ENCODE measurements at regions of chr14 and their contacts with region 1.

Region 1: DNA sequence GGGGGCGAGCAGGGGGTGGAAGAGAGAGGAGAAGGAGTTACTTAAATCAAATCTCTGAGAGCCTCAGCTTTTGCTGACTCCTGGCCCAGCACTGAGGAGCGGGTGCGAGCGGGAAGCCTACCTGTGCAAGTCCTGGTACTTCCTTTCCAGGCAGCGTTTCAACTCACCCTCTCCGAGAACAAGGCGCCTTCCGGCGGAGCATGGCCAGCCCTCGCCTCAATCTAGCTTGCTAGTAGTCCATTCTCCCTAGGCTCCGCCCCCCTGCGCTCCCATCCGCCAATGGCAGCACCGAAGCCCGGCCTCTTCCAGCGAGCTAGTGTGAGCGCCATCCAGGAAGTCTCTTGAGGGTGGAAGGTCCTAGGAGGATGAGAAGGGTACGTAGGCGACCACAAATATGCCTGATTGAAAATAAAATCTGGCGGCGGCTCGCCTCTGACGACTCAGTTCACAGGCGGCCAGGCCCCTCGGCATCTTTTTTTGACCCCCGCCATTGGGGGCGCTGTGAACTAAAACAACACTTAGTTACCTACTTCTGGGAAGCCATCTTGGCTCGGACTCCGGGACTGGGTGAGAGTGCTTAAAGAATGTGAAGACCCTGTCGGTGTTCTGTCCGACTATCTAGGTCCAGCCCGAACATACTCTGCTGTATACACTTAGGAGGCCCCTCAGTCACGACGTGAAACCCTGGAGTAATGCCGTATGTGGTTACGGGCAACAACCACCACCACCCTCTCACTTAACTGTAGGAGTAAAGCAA is at the start of gene CHD8:
- DNase-seq: peak; percentile 99
- H3K4me3 Mint-ChIP-seq: peak within 1 kb of the TSS; percentile 98
- H3K27ac Mint-ChIP-seq: peak within 1 kb of the TSS; percentile 99
- H3K4me1 Mint-ChIP-seq: peaks cover 37% of the 10 kb centered on the region
- H3K27me3 Mint-ChIP-seq: no peaks in the 10 kb centered on the region
- total RNA-seq, gene CHD8: 108 to 112 TPM

Region 2: GRCh38 chr14:21185491-21185890 is 270.6 kb before region 1 on chr14:
- CTCF ChIA-PET with region 1: no interaction called
- POLR2A ChIA-PET with region 1: no interaction called
- DNase-seq: no peak
- H3K4me3 Mint-ChIP-seq: no peak overlapping the region
- H3K27ac Mint-ChIP-seq: no peak overlapping the region
- H3K4me1 Mint-ChIP-seq: no peaks in the 10 kb centered on the region
- H3K27me3 Mint-ChIP-seq: peaks cover 24% of the 10 kb centered on the region

Region 3: GRCh38 chr14:21428930-21429329 is 27.2 kb before region 1 on chr14:
- CTCF ChIA-PET with region 1: interaction called, 7 read pairs
- POLR2A ChIA-PET with region 1: interaction called, 13 read pairs
- DNase-seq: no peak
- H3K4me3 Mint-ChIP-seq: no peak overlapping the region
- H3K27ac Mint-ChIP-seq: no peak overlapping the region
- H3K4me1 Mint-ChIP-seq: peaks cover 6% of the 10 kb centered on the region
- H3K27me3 Mint-ChIP-seq: no peaks in the 10 kb centered on the region

Region 4: DNA sequence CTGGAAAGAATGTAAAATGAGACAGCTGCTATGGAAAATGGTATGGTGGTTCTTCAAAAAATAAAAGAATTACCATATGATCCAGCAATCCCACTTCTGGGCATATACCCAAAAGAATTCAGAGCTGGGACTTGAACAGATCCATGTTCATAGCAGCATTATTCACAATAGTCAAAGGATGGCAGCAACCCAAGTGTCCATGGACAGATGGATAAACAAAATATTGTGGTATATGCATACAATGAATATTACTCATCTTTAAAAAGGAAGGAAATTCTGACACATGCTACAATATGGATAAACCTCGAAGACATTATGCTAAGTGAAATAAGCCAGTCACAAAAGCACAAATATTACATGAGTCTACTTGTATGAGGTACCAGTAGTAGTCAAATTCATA is 11.5 kb after region 1 on chr14:
- CTCF ChIA-PET with region 1: interaction called, 18 read pairs
- POLR2A ChIA-PET with region 1: interaction called, 20 read pairs
- DNase-seq: no peak
- H3K4me3 Mint-ChIP-seq: no peak overlapping the region
- H3K27ac Mint-ChIP-seq: no peak overlapping the region
- H3K4me1 Mint-ChIP-seq: peaks cover 4% of the 10 kb centered on the region
- H3K27me3 Mint-ChIP-seq: no peaks in the 10 kb centered on the region

Region 5: DNA sequence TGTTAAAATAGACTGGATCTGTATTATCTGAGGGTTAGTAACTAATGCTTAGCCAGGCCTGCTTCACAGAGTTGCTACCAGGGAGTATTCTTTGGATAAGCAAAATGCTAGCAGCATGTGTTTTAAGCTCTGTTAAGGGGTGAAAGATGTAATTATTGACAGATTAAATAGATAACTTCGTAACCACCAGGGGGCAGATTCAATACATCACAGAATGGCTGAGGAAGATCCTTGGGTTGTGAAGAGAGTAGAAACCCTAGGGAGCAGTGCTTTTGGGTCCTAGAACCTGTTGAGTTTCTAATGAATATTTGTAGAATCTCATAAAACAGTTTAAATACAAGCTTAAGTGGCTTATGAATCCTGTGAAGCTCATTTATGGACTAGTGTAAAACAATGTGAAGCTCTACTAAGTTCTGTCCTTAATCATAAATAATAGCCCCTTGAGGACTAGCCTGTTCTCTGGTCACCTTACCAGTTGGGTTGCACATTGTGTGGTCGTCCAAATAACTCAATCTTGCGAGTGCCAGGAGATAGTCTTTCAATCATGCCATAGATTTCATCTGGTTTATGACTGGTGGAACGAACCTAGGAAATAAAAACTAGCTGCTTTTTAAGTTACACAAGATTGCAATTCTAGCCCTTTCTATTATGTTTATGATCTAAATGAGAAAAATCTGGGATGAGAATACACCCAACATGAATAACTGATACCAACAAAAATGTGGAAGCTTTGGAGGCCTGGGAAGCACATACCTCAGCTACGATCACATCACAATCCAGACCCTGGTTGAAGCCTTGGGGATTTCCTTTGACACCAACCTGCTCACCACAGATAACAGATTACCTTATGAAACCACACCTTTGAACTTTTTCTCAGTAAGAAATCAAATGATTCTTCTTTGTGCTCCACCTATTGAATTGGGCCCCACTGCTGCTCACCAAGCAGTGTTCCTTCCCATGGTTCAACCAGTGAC is 42.8 kb after region 1 on chr14:
- CTCF ChIA-PET with region 1: interaction called, 17 read pairs
- POLR2A ChIA-PET with region 1: interaction called, 8 read pairs
- DNase-seq: no peak
- H3K4me3 Mint-ChIP-seq: no peak overlapping the region
- H3K27ac Mint-ChIP-seq: peak overlapping the region; percentile 27
- H3K4me1 Mint-ChIP-seq: peaks cover 24% of the 10 kb centered on the region
- H3K27me3 Mint-ChIP-seq: no peaks in the 10 kb centered on the region